T-cell (primary cell): ENCODE measurements at regions of chr4 and their contacts with region 1.

Region 1: GRCh38 chr4:56977321-56978012 is at the start of gene NOA1:
- DNase-seq: peak; percentile 93 to 100 (median 96)
- ATAC-seq: peak; percentile 76 to 81 (median 80)
- H3K4me3 ChIP-seq: peak within 1 kb of the TSS; percentile 98 to 99
- H3K4me3 Mint-ChIP-seq: peak within 1 kb of the TSS; percentile 100
- H3K27ac ChIP-seq: peak within 1 kb of the TSS; percentile 80
- H3K27ac Mint-ChIP-seq: peak within 1 kb of the TSS; percentile 98
- H3K4me1 ChIP-seq: peaks cover 22 to 52% of the 10 kb centered on the region in 2 experiments
- H3K4me1 Mint-ChIP-seq: peaks cover 65 to 74% (median 68%) of the 10 kb centered on the region in 3 donors
- H3K27me3 ChIP-seq: no peaks in the 10 kb centered on the region
- H3K27me3 Mint-ChIP-seq: no peaks in the 10 kb centered on the region
- total RNA-seq, gene NOA1: 15.2 to 27.2 (median 22.1) TPM

Region 2: DNA sequence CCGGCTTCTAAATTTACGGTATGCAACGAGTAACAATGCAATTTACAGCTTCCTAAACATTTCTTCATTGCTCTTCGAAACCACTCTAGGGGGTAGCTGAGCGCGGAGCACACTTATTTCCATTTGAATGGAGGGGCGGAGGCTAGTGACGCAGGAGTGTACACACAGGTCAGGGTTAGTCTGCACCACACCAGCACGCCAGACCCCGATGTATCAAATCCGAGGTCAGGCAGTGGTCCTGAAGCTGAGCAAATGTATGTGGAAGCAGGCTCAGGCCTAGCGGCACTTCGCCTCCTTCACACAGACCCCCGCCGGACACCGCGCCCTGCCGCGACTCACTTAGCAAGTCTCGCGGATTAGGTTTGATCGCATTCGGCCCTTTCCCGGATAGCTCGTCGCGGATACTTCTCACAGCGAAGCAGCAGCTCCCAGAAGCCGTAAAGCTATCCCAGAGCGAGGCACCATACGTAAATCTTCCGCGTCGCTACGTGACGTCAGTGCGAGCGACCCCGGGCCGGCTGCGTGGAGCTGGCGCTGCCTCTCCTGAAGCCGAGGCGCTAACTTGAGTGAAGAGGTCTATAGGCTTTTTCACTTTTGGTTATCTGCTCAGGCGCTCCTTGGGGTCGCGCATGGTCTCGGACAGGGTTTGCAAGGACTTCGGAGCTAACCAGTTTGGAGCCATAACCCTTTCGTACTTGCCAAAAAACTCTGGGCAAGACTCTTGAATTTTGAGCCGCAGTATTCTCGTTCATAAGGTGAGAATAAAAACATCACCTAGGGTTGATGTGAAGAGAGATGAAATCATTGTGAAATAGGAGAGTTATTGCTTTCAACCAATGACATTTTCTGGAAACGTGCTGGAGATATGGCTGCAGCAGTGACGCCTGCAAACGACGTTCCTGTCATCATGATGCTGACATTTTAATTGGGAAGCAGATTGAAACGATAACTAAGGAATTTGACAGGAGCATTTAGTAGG is 590.2 kb before region 1 on chr4 and contains the start of gene AASDH:
- CTCF ChIA-PET with region 1: interaction called in 1 of 2 experiments, 3 read pairs
- POLR2A ChIA-PET with region 1: interaction called, 4 to 13 read pairs
- DNase-seq: peak; percentile 90 to 98 (median 94)
- ATAC-seq: peak; percentile 88 to 92 (median 89)
- H3K4me3 ChIP-seq: peak within 1 kb of the TSS; percentile 76 to 95
- H3K4me3 Mint-ChIP-seq: peak within 1 kb of the TSS; percentile 88 to 98 (median 91)
- H3K27ac ChIP-seq: peak within 1 kb of the TSS; percentile 97
- H3K27ac Mint-ChIP-seq: peak within 1 kb of the TSS; percentile 95 to 99
- H3K4me1 ChIP-seq: peaks cover 11 to 15% of the 10 kb centered on the region in 2 experiments
- H3K4me1 Mint-ChIP-seq: peaks cover 40 to 56% (median 52%) of the 10 kb centered on the region in 3 donors
- H3K27me3 ChIP-seq: no peaks in the 10 kb centered on the region
- H3K27me3 Mint-ChIP-seq: no peaks in the 10 kb centered on the region
- total RNA-seq, gene AASDH: 13.3 to 17.7 (median 16.0) TPM

Region 3: DNA sequence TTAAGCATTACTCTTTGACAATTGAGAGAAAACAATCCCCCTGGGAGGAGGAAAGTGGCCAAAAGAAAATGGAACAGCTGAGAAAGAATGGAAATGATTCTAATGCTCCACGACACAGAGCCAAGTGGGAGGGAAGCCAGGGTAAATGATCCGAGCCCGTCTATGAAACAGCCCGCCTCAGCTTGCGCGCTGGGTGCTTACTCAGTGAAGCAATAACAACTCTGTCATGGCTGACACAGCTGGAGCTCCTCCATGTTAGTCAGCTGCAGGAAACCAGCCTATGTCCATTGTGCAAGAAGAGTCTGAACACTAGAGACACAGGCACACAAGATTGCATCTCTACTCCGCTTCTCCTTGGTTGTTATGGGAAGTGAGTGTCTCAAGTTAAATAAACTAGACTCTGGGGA is 19.4 kb before region 1 on chr4:
- CTCF ChIA-PET with region 1: interaction called in 1 of 2 experiments, 4 read pairs
- POLR2A ChIA-PET with region 1: interaction called, 3 to 16 read pairs
- DNase-seq: peak in 1 of 35 experiments; percentile 4
- ATAC-seq: no peak
- H3K4me3 ChIP-seq: no peak overlapping the region
- H3K4me3 Mint-ChIP-seq: no peak overlapping the region
- H3K27ac ChIP-seq: no peak overlapping the region
- H3K27ac Mint-ChIP-seq: no peak overlapping the region
- H3K4me1 ChIP-seq: no peaks in the 10 kb centered on the region
- H3K4me1 Mint-ChIP-seq: no peaks in the 10 kb centered on the region
- H3K27me3 ChIP-seq: no peaks in the 10 kb centered on the region
- H3K27me3 Mint-ChIP-seq: no peaks in the 10 kb centered on the region

Region 4: DNA sequence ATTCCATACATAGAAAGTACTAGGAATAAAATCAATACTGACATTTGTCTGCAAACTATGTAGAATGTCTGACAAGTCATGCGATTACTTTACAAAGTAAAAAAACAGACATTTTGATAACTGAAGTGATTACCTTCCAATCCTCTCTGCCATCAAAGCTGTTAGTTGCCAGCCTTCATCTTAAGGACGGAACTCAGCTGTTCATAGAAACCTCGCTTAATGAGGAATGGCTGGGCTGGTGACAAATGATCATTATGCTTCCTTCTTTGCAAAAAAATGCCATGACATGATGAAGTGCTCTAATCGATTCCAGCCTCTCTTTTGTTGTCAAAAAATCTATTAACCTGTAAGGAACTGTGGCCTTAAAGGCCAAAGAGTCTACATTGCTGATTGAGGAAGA is 1347.6 kb after region 1 on chr4:
- CTCF ChIA-PET with region 1: no interaction called
- POLR2A ChIA-PET with region 1: no interaction called
- DNase-seq: no peak
- ATAC-seq: no peak
- H3K4me3 ChIP-seq: no peak overlapping the region
- H3K4me3 Mint-ChIP-seq: no peak overlapping the region
- H3K27ac ChIP-seq: no peak overlapping the region
- H3K27ac Mint-ChIP-seq: no peak overlapping the region
- H3K4me1 ChIP-seq: no peaks in the 10 kb centered on the region
- H3K4me1 Mint-ChIP-seq: no peaks in the 10 kb centered on the region
- H3K27me3 ChIP-seq: no peaks in the 10 kb centered on the region
- H3K27me3 Mint-ChIP-seq: no peaks in the 10 kb centered on the region